ENCODE measurements at regions of chr1 and their contacts with region 1.

Region 1: DNA sequence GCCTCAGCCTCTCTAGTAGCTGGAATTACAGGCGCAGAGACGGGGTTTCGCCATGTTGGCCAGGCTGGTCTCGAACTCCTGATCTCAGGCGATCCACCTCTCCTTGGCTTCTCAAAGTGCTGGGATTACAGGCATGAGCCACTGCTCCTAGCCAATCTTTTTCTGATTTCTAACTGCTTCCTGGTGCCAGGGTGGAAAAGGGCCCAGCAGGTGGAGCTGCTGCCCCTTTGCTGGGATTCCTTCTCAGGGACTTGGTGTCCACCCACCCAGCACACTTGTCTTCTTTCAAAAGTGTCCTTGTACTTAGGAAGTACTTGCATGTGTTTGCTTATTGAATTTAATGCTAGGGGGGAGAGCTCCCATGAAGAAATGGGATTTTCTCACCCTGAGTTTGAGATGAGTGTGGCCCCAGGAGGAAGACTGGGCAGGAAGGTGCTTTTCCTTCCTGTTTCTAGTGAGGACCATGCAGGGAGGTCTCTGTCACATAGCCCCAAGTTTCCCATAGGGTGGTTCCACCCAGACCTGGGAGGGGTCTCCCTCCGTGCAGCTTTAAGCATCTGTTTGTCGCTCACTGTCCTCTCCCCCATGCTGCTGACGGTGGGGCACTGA is 14.2 kb downstream of the UTP11 start:
- DNase-seq: peak; percentile 80
- ATAC-seq: no peak
- H3K4me3 Mint-ChIP-seq: no peak overlapping the region
- H3K27ac Mint-ChIP-seq: peak overlapping the region; percentile 91
- H3K4me1 Mint-ChIP-seq: peaks cover 58% of the 10 kb centered on the region
- H3K27me3 Mint-ChIP-seq: no peaks in the 10 kb centered on the region

Region 2: GRCh38 chr1:36864182-36864822 is 1162.4 kb before region 1 on chr1:
- CTCF ChIA-PET with region 1: no interaction called
- POLR2A ChIA-PET with region 1: no interaction called
- intact Hi-C with region 1: no loop called
- DNase-seq: peak; percentile 64
- ATAC-seq: no peak
- H3K4me3 Mint-ChIP-seq: no peak overlapping the region
- H3K27ac Mint-ChIP-seq: no peak overlapping the region
- H3K4me1 Mint-ChIP-seq: no peaks in the 10 kb centered on the region
- H3K27me3 Mint-ChIP-seq: no peaks in the 10 kb centered on the region

Region 3: GRCh38 chr1:37755290-37755689 is 271.4 kb before region 1 on chr1:
- CTCF ChIA-PET with region 1: no interaction called
- POLR2A ChIA-PET with region 1: no interaction called
- intact Hi-C with region 1: loop called in 1 of 2 experiments (anchors 5 kb)
- DNase-seq: peak; percentile 70
- ATAC-seq: peak; percentile 93
- H3K4me3 Mint-ChIP-seq: no peak overlapping the region
- H3K27ac Mint-ChIP-seq: no peak overlapping the region
- H3K4me1 Mint-ChIP-seq: peaks cover 18% of the 10 kb centered on the region
- H3K27me3 Mint-ChIP-seq: peaks cover 33% of the 10 kb centered on the region

Region 4: GRCh38 chr1:38039331-38040088 is 12.8 kb after region 1 on chr1:
- CTCF ChIA-PET with region 1: interaction called, 10 read pairs
- POLR2A ChIA-PET with region 1: interaction called, 5 read pairs
- intact Hi-C with region 1: no loop called
- DNase-seq: no peak
- ATAC-seq: no peak
- H3K4me3 Mint-ChIP-seq: no peak overlapping the region
- H3K27ac Mint-ChIP-seq: no peak overlapping the region
- H3K4me1 Mint-ChIP-seq: peaks cover 4% of the 10 kb centered on the region
- H3K27me3 Mint-ChIP-seq: peaks cover 44% of the 10 kb centered on the region

Region 5: DNA sequence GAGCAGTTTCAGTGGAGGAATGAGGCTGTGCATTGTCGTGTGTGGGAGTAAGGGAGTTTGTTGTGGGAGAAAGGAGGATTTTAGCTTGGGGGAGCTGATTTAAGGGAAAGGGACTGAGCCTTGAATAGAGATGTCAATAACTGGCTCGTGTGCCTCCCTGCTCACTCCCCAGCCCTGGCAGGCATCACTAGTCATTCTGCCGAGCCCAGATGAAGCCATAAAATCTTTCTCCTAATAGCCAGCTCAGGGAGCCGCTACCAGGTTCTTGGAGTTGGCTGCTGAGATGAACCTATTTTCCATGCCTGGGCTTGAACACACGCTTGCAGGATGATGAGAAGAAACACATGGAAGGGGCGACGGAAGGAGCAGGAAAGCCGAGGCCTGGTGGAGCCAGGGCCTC is 84.9 kb after region 1 on chr1:
- CTCF ChIA-PET with region 1: no interaction called
- POLR2A ChIA-PET with region 1: no interaction called
- intact Hi-C with region 1: no loop called
- DNase-seq: no peak
- ATAC-seq: no peak
- H3K4me3 Mint-ChIP-seq: no peak overlapping the region
- H3K27ac Mint-ChIP-seq: no peak overlapping the region
- H3K4me1 Mint-ChIP-seq: peaks cover 3% of the 10 kb centered on the region
- H3K27me3 Mint-ChIP-seq: peaks cover 14% of the 10 kb centered on the region

Region 6: GRCh38 chr1:38334930-38335592 is 308.4 kb after region 1 on chr1:
- CTCF ChIA-PET with region 1: no interaction called
- POLR2A ChIA-PET with region 1: no interaction called
- intact Hi-C with region 1: loop called in 1 of 2 experiments (anchors 1 kb)
- DNase-seq: peak; percentile 59
- ATAC-seq: peak; percentile 84
- H3K4me3 Mint-ChIP-seq: no peak overlapping the region
- H3K27ac Mint-ChIP-seq: peak overlapping the region; percentile 30
- H3K4me1 Mint-ChIP-seq: peaks cover 11% of the 10 kb centered on the region
- H3K27me3 Mint-ChIP-seq: peaks cover 4% of the 10 kb centered on the region

Region 7: DNA sequence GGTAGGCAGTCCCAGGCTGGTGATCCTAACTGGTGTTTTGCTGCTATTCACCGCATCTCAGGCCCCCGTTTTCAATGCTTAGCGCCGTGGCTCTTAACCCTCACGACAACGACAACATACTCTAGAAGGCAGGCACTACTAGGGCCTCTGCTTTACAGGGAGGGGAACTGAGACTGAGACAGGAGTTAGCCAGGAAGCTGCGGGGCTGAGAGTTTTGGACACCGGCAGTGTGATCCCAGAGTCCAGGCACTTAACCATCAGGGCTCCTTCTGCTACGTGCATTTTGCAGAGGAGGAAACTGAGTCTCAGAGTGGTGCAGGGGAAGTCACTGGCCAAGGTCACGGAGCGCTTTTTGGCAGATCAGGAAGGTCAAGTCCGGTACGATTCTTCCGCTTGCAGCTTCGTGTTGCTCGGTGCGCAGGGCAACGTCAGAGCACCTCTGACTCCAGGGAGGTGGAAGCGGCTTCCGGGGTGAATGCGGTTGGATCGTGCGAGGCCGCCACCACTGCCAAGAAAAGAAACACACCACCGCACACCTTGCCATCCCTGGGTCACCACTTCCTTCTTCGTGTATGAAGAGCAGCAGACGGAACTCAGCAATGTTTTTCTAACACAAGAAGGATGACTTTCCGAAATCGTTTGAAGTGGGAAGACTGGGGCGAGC is 532.6 kb after region 1 on chr1:
- CTCF ChIA-PET with region 1: no interaction called
- POLR2A ChIA-PET with region 1: no interaction called
- intact Hi-C with region 1: loop called in 1 of 2 experiments (anchors 1 kb)
- DNase-seq: peak; percentile 91
- ATAC-seq: peak; percentile 91
- H3K4me3 Mint-ChIP-seq: peak overlapping the region; percentile 56
- H3K27ac Mint-ChIP-seq: peak overlapping the region; percentile 77
- H3K4me1 Mint-ChIP-seq: peaks cover 49% of the 10 kb centered on the region
- H3K27me3 Mint-ChIP-seq: peaks cover 23% of the 10 kb centered on the region

Region 8: GRCh38 chr1:38834937-38835827 is 808.5 kb after region 1 on chr1:
- CTCF ChIA-PET with region 1: interaction called, 4 read pairs
- POLR2A ChIA-PET with region 1: no interaction called
- intact Hi-C with region 1: loop called (anchors 2 to 5 kb)
- DNase-seq: peak; percentile 53
- ATAC-seq: peak; percentile 90
- H3K4me3 Mint-ChIP-seq: no peak overlapping the region
- H3K27ac Mint-ChIP-seq: no peak overlapping the region
- H3K4me1 Mint-ChIP-seq: no peaks in the 10 kb centered on the region
- H3K27me3 Mint-ChIP-seq: peaks cover 1% of the 10 kb centered on the region

Region 9: GRCh38 chr1:39189592-39190041 is 1162.9 kb after region 1 on chr1:
- CTCF ChIA-PET with region 1: no interaction called
- POLR2A ChIA-PET with region 1: no interaction called
- intact Hi-C with region 1: loop called in 1 of 2 experiments (anchors 5 kb)
- DNase-seq: no peak
- ATAC-seq: no peak
- H3K4me3 Mint-ChIP-seq: no peak overlapping the region
- H3K27ac Mint-ChIP-seq: peak overlapping the region; percentile 91
- H3K4me1 Mint-ChIP-seq: peaks cover 90% of the 10 kb centered on the region
- H3K27me3 Mint-ChIP-seq: no peaks in the 10 kb centered on the region

Measured in activated CD4-positive, alpha-beta T cell treated with anti-CD3 and anti-CD28 coated beads for 36 hours (primary cell).